ENCODE measurements at regions of chr3 and their contacts with region 1.

Region 1: GRCh38 chr3:141738022-141738890 is at the start of gene RNF7:
- DNase-seq: peak; percentile 97
- H3K4me3 Mint-ChIP-seq: peak within 1 kb of the TSS; percentile 100
- H3K27ac Mint-ChIP-seq: peak within 1 kb of the TSS; percentile 99
- H3K4me1 Mint-ChIP-seq: peaks cover 30% of the 10 kb centered on the region
- H3K27me3 Mint-ChIP-seq: peaks cover 5% of the 10 kb centered on the region
- total RNA-seq, gene RNF7: 70.5 and 70.9 TPM in 2 replicates

Region 2: GRCh38 chr3:141311496-141312353 is 426.5 kb before region 1 on chr3:
- intact Hi-C with region 1: loop called (anchors 2 kb)
- DNase-seq: peak; percentile 97
- H3K4me3 Mint-ChIP-seq: peak overlapping the region; percentile 95
- H3K27ac Mint-ChIP-seq: peak overlapping the region; percentile 98
- H3K4me1 Mint-ChIP-seq: peaks cover 51% of the 10 kb centered on the region
- H3K27me3 Mint-ChIP-seq: no peaks in the 10 kb centered on the region

Region 3: GRCh38 chr3:141575879-141576743 is 162.1 kb before region 1 on chr3:
- intact Hi-C with region 1: loop called (anchors 10 kb)
- DNase-seq: no peak
- H3K4me3 Mint-ChIP-seq: peak overlapping the region; percentile 25
- H3K27ac Mint-ChIP-seq: peak overlapping the region; percentile 61
- H3K4me1 Mint-ChIP-seq: peaks cover 10% of the 10 kb centered on the region
- H3K27me3 Mint-ChIP-seq: no peaks in the 10 kb centered on the region

Region 4: GRCh38 chr3:141690431-141691072 is 47.7 kb before region 1 on chr3:
- intact Hi-C with region 1: no loop called
- DNase-seq: no peak
- H3K4me3 Mint-ChIP-seq: no peak overlapping the region
- H3K27ac Mint-ChIP-seq: no peak overlapping the region
- H3K4me1 Mint-ChIP-seq: peaks cover 13% of the 10 kb centered on the region
- H3K27me3 Mint-ChIP-seq: no peaks in the 10 kb centered on the region

Region 5: GRCh38 chr3:141913150-141913811 is 175.0 kb after region 1 on chr3:
- intact Hi-C with region 1: loop called (anchors 1 kb)
- DNase-seq: peak; percentile 26
- H3K4me3 Mint-ChIP-seq: no peak overlapping the region
- H3K27ac Mint-ChIP-seq: no peak overlapping the region
- H3K4me1 Mint-ChIP-seq: peaks cover 4% of the 10 kb centered on the region
- H3K27me3 Mint-ChIP-seq: no peaks in the 10 kb centered on the region

Region 6: GRCh38 chr3:142148792-142149672 is 410.8 kb after region 1 on chr3 and contains the start of gene TFDP2:
- intact Hi-C with region 1: loop called (anchors 2 kb)
- DNase-seq: peak; percentile 88
- H3K4me3 Mint-ChIP-seq: peak within 1 kb of the TSS; percentile 90
- H3K27ac Mint-ChIP-seq: peak within 1 kb of the TSS; percentile 80
- H3K4me1 Mint-ChIP-seq: peaks cover 18% of the 10 kb centered on the region
- H3K27me3 Mint-ChIP-seq: peaks cover 4% of the 10 kb centered on the region
- total RNA-seq, gene TFDP2: 19.7 and 27.5 TPM in 2 replicates

Region 7: DNA sequence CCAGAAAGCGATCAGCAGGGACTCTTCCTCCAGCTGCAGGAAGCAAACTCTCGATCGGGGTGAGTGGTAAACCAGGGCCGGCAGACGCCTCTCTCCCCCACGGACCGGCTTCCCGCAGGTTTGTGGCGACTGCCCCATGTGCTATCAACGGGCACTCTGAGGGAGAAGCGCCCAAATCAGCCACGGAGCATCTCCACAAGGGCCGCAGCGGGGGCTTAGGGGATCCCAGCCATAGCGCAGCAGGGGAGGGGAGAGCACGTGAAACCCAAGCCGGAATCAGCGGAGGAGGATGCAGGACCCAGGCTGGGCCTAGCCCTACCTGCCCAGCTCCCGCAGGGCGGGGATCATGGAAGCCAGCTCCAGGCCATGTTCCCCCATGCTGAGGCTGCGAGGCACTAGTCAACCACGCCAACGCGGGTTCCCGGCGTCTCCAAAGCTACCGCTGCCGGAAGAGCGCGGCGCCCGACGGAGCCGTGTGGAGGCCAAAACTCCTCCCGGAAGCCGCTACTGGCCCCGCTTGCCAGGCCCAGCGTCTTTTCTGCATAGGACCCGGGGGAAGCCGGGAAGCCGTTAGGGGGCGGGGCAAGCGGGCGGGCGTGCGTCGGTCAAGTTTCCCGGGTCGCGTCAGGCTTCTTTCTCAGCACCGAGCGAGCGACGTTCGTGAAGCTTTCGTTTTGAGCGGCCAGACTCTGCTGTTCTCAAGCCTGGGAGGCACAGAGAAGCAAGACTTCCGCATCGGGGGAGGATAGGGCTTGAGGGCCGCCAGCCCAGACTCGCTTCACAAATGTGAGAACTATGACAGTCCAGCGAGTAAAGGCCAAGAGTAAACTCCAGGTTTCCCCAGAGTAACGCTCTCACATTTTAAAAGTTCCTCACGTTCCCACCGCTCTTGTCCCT is 840.3 kb after region 1 on chr3 and contains the start of gene ATR:
- intact Hi-C with region 1: loop called (anchors 1 kb)
- DNase-seq: peak; percentile 96
- H3K4me3 Mint-ChIP-seq: peak within 1 kb of the TSS; percentile 100
- H3K27ac Mint-ChIP-seq: peak within 1 kb of the TSS; percentile 100
- H3K4me1 Mint-ChIP-seq: peaks cover 46% of the 10 kb centered on the region
- H3K27me3 Mint-ChIP-seq: peaks cover 10% of the 10 kb centered on the region
- total RNA-seq, gene ATR: 27.0 and 35.5 TPM in 2 replicates

Region 8: GRCh38 chr3:143001369-143002082 is 1263.3 kb after region 1 on chr3 and contains the start of gene U2SURP:
- intact Hi-C with region 1: loop called (anchors 10 kb)
- DNase-seq: peak; percentile 91
- H3K4me3 Mint-ChIP-seq: peak within 1 kb of the TSS; percentile 95
- H3K27ac Mint-ChIP-seq: peak within 1 kb of the TSS; percentile 96
- H3K4me1 Mint-ChIP-seq: peaks cover 45% of the 10 kb centered on the region
- H3K27me3 Mint-ChIP-seq: peaks cover 6% of the 10 kb centered on the region
- total RNA-seq, gene U2SURP: 186 and 205 TPM in 2 replicates